MCF 10A (cell line): ENCODE measurements at regions of chr17 and their contacts with region 1.

Region 1: DNA sequence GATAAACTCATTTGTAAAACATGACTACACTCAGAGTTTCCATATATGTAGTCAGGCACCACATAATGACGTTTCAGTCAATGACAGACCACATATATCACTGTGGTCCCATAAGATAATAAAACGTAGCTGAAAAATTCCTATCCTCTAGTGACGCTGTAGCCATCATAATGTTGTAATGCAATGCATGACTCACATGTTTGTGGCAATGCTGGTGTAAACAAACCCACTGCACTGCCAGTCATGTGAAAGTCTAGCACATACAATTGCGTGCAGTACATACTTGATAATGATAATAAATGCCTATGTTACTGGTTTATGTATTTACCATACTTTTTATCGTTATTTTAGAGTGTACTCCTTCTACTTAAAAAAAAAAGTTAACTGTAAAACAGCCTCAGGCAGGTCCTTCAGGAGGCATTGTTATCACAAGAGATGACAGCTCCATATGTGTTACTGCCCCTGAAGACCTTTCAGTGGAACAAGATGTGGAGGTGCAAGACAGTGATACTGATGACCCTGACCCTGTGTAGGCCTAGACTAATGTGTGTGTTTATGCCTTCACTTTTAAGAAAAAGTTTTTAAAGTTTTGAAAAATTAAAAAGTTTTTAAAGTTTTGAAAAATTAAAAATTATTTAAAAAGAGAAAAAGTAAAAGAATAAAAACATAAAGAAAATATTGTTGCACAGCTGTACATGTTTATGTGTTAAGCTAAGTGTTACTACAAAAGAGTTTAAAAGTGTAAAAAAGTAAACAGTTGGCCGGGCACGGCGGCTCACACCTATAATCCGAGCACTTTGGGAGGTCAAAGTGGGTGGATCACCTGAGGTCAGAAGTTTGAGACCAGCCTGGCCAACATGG is 9.0 kb downstream of the STAT5B start:
- DNase-seq: peak; percentile 81
- H3K4me3 Mint-ChIP-seq: no peak overlapping the region
- H3K27ac Mint-ChIP-seq: no peak overlapping the region
- H3K4me1 Mint-ChIP-seq: peaks cover 7% of the 10 kb centered on the region
- H3K27me3 Mint-ChIP-seq: no peaks in the 10 kb centered on the region
- CTCF ChIP-seq: no peak

Region 2: GRCh38 chr17:42255425-42255810 is 11.7 kb before region 1 on chr17:
- CTCF ChIA-PET with region 1: no interaction called
- POLR2A ChIA-PET with region 1: interaction called, 11 read pairs
- intact Hi-C with region 1: no loop called
- DNase-seq: no peak
- H3K4me3 Mint-ChIP-seq: no peak overlapping the region
- H3K27ac Mint-ChIP-seq: no peak overlapping the region
- H3K4me1 Mint-ChIP-seq: peaks cover 26% of the 10 kb centered on the region
- H3K27me3 Mint-ChIP-seq: no peaks in the 10 kb centered on the region
- CTCF ChIP-seq: no peak